ENCODE measurements at regions of chr5 and their contacts with region 1.

Region 1: GRCh38 chr5:65512170-65512937 is 30.6 kb upstream of the ADAMTS6 start:
- DNase-seq: no peak
- ATAC-seq: no peak
- H3K4me3 ChIP-seq: no peak overlapping the region
- H3K4me3 Mint-ChIP-seq: no peak overlapping the region
- H3K27ac ChIP-seq: no peak overlapping the region
- H3K27ac Mint-ChIP-seq: no peak overlapping the region
- H3K4me1 ChIP-seq: no peaks in the 10 kb centered on the region
- H3K4me1 Mint-ChIP-seq: peaks cover 0 to 3% (median 0%) of the 10 kb centered on the region in 3 donors
- H3K27me3 ChIP-seq: no peaks in the 10 kb centered on the region
- H3K27me3 Mint-ChIP-seq: no peaks in the 10 kb centered on the region

Region 2: GRCh38 chr5:64834611-64835010 is 677.7 kb before region 1 on chr5:
- CTCF ChIA-PET with region 1: no interaction called
- POLR2A ChIA-PET with region 1: interaction called in 1 of 2 experiments, 20 read pairs
- DNase-seq: no peak
- ATAC-seq: no peak
- H3K4me3 ChIP-seq: no peak overlapping the region
- H3K4me3 Mint-ChIP-seq: no peak overlapping the region
- H3K27ac ChIP-seq: no peak overlapping the region
- H3K27ac Mint-ChIP-seq: no peak overlapping the region
- H3K4me1 ChIP-seq: no peaks in the 10 kb centered on the region
- H3K4me1 Mint-ChIP-seq: no peaks in the 10 kb centered on the region
- H3K27me3 ChIP-seq: no peaks in the 10 kb centered on the region
- H3K27me3 Mint-ChIP-seq: no peaks in the 10 kb centered on the region

Measured in T-cell (primary cell).